ENCODE measurements at regions of chr3 and their contacts with region 1.

Region 1: DNA sequence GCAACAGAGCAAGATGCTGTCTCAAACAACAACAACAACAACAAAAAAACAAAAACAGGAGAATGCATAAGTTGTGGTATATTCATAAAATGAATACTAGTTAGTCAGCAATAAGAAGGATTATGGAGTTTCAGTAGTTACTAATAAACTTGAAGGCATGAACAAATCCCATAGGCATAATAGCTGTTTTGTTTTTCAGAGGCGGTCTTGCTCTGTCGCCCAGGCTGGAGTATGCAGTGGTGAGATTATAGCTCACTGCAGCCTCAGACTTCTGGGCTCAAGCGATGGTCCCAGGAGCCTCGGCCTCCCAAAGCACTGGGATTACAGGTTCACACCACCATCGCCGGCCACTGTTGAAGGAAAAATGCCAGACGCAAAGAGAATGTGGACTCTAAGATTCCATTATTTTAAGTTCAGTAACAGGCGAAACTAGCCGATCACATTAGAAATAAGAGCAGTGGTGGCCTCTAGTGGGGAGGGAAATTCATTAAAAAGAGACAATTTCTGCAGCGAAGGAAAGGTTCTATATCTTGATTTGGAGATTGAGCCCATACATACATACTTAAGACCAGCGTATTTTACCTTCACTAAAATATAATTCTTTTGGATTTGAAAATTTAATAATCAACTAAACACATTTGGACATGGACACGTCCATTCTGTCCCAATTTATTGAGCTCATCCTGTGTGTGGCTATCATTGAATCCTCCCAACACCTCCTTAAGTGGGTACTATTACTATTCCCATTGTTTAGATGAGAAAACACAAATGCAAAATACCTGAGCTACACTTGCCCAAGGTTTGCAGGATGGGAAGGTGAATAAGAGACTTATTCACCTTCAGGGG is 27.4 kb upstream of the HDAC11 start:
- DNase-seq: peak in 1 of 2 experiments; percentile 61
- H3K4me3 ChIP-seq: peak overlapping the region; percentile 68
- H3K4me3 Mint-ChIP-seq: peak overlapping the region; percentile 78
- H3K27ac Mint-ChIP-seq: peak overlapping the region; percentile 92
- H3K4me1 ChIP-seq: no peaks in the 10 kb centered on the region
- H3K4me1 Mint-ChIP-seq: no peaks in the 10 kb centered on the region
- H3K27me3 ChIP-seq: no peaks in the 10 kb centered on the region
- H3K27me3 Mint-ChIP-seq: no peaks in the 10 kb centered on the region
- CTCF ChIP-seq: peak; percentile 60 to 63

Region 2: GRCh38 chr3:13229273-13229949 is 223.3 kb before region 1 on chr3:
- CTCF ChIA-PET with region 1: interaction called, 7 read pairs
- POLR2A ChIA-PET with region 1: no interaction called
- intact Hi-C with region 1: loop called (anchors 10 kb)
- DNase-seq: peak; percentile 52 to 57
- H3K4me3 ChIP-seq: no peak overlapping the region
- H3K4me3 Mint-ChIP-seq: no peak overlapping the region
- H3K27ac Mint-ChIP-seq: no peak overlapping the region
- H3K4me1 ChIP-seq: no peaks in the 10 kb centered on the region
- H3K4me1 Mint-ChIP-seq: no peaks in the 10 kb centered on the region
- H3K27me3 ChIP-seq: 0 out of 2 replicates have a peak, but pooled peaks cover 1% of the 10 kb centered on the region
- H3K27me3 Mint-ChIP-seq: peaks cover 15% of the 10 kb centered on the region
- CTCF ChIP-seq: peak in 1 of 2 experiments; percentile 24

Region 3: GRCh38 chr3:13391308-13391707 is 61.4 kb before region 1 on chr3:
- CTCF ChIA-PET with region 1: interaction called, 17 read pairs
- POLR2A ChIA-PET with region 1: no interaction called
- intact Hi-C with region 1: loop called (anchors 2 kb)
- DNase-seq: no peak
- H3K4me3 ChIP-seq: no peak overlapping the region
- H3K4me3 Mint-ChIP-seq: no peak overlapping the region
- H3K27ac Mint-ChIP-seq: no peak overlapping the region
- H3K4me1 ChIP-seq: no peaks in the 10 kb centered on the region
- H3K4me1 Mint-ChIP-seq: no peaks in the 10 kb centered on the region
- H3K27me3 ChIP-seq: no peaks in the 10 kb centered on the region
- H3K27me3 Mint-ChIP-seq: no peaks in the 10 kb centered on the region
- CTCF ChIP-seq: peak in 1 of 2 experiments; percentile 32

Region 4: DNA sequence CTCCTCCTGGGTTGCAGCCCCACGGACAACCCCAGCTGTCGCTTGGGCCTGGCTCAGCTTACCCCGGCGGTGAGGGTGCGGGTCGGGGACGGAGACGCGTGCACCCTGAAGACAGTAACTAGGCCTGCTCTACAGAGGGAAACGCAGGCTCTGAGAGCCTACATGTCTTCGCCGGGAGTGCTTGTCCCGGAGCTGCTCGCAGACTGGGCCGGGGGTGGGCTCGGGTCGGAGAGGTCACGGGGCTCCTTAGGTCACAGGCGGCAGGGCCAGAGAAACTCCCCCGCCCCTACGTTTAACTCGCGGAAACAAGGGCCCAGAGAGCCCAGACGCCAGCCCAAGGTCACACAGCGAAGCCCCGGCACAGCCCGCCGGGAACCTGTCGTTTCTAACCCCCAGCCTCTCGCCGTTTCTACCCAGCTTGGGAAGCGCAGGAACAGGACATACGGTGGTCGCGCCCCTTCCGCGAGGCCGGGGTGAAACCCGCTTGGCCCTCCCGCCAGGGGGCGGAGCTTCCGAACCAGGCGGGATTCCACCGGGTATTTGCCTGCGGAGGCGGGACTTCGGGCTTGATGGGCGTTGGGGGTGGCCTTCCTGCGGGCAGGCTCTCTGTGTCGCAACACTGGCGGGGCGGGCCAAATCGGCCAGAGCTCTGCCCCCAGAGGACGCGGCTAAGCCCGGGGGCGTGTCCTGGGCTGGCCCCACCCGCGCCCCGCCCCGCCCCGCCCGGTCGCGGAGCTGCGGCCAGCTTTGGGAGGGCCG is 27.0 kb after region 1 on chr3 and contains the start of gene HDAC11:
- CTCF ChIA-PET with region 1: interaction called, 10 read pairs
- POLR2A ChIA-PET with region 1: interaction called, 3 read pairs
- intact Hi-C with region 1: loop called (anchors 1 kb)
- DNase-seq: peak; percentile 98 to 99
- H3K4me3 ChIP-seq: peak within 1 kb of the TSS; percentile 71
- H3K4me3 Mint-ChIP-seq: peak within 1 kb of the TSS; percentile 75
- H3K27ac Mint-ChIP-seq: no peak within 1 kb of the TSS
- H3K4me1 ChIP-seq: peaks cover 9% of the 10 kb centered on the region
- H3K4me1 Mint-ChIP-seq: no peaks in the 10 kb centered on the region
- H3K27me3 ChIP-seq: no peaks in the 10 kb centered on the region
- H3K27me3 Mint-ChIP-seq: no peaks in the 10 kb centered on the region
- CTCF ChIP-seq: no peak
- total RNA-seq, gene HDAC11: 10.5 and 10.9 TPM in 2 replicates

Region 5: DNA sequence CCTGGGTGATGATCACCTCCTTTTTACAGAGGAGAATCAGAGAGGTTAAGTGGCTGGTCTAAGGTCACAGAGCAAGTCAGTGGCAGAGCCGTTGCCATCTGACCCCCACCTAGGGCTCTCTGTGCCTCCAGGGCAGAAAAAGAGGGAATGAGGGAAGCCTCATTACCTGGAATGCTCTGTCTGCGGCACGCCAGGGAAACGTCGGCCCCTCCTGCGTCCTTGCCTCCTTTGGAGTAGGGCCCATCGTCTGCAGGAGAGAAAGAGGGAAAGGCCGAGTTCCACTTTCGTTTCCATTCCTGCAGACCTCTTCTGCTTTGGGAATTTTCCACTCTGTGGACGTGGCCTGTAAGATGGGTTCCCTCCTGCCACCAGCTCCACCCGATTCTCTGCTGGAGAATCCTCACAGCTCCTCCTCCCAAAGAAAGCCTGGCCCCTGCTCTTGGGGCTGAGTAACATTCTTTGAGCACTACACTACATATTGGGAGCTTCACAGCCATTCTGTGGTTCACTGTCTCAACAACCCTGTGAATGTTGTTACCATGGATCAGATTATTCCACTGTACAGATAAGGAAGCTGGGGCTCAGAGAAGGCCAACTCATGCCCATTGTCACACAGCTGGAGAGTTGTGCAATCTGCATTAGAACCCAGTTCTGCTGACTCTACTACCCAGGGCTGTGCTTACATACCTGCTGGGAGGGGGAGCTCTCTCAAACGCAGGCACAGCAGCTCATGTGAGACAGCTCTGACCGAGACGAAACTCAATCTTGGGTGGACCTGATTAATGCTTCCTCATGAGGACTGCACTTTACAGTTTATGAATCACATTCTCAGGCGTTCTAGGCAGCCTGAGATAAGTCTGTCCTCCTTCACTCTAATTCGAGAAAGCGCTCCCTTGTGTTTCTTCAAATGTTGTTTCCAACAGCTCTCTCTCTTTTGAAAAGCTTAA is 1073.2 kb after region 1 on chr3:
- CTCF ChIA-PET with region 1: no interaction called
- POLR2A ChIA-PET with region 1: no interaction called
- intact Hi-C with region 1: no loop called
- DNase-seq: peak in 1 of 2 experiments; percentile 7
- H3K4me3 ChIP-seq: no peak overlapping the region
- H3K4me3 Mint-ChIP-seq: no peak overlapping the region
- H3K27ac Mint-ChIP-seq: no peak overlapping the region
- H3K4me1 ChIP-seq: no peaks in the 10 kb centered on the region
- H3K4me1 Mint-ChIP-seq: no peaks in the 10 kb centered on the region
- H3K27me3 ChIP-seq: no peaks in the 10 kb centered on the region
- H3K27me3 Mint-ChIP-seq: peaks cover 3% of the 10 kb centered on the region
- CTCF ChIP-seq: no peak